ENCODE measurements at regions of chr4 and their contacts with region 1.

Region 1: DNA sequence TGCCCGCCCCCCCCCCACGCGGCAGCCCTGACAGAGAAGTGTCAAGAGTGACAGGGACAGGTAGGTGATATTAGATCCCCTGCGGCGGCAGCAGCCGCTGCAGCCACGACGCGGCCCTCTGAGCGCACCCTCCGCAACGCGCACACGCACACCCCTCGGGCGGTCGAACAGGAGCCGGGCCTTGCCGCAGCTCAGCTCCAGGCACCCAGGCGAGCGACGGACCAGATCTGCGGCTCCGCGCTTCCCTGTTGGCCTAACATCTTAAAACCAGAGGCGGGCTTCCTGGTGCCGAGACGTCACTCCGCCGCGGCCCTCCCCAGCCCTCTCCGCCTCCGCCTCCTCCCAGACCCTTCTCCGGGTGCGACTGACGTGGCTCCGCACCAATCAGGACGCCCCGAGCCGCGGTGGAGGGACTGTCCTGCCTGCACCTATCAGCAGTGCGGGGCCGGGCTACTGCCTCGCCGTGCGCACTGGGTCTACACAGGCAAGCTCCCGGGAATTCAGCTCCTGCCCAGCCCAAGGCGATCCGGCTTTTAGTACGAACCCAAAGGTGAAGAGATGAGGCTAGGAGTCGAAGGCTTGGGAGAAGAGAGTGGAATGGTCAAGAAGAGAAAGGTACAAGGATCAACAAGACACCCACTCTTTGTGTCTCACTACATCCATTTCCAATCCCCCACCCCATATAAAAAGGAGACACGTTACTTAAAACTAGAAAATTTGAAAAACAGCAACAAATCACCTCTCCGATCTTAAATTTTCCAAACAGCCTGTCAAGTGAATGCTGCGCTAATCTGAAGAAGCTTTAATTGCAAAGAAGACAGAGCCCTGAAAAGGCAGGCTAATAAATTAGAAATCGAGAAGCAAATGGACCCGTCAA is at the start of gene PITX2:
- DNase-seq: peak; percentile 98

Region 2: DNA sequence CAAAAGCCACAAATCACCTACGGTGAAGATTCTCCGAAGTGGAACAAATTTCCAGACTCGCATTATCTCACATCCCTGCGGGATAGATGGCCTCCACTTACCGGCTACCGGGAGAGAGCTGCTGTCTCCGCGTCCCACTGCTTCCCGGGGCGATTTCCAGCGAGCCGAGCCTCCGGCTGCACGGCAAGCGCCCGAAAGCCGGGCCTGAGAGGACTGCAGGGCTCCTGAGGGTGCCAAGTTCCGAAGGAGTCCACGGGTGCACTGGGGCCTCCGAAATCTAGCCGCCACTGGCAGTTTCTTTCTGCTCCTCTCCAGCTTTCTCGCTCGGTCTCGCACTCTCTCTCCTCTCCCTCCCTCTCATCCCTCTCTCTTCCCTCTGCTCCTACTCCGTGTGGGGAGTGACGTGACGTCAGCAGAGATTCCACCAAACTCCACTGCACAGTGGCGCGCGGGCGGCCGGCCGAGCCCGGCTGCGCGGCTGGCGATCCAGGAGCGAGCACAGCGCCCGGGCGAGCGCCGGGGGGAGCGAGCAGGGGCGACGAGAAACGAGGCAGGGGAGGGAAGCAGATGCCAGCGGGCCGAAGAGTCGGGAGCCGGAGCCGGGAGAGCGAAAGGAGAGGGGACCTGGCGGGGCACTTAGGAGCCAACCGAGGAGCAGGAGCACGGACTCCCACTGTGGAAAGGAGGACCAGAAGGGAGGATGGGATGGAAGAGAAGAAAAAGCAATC is 13.8 kb after region 1 on chr4:
- CTCF ChIA-PET with region 1: interaction called, 4 read pairs
- POLR2A ChIA-PET with region 1: interaction called, 11 read pairs
- DNase-seq: peak; percentile 77